ENCODE measurements at regions of chr2 and their contacts with region 1.

Region 1: DNA sequence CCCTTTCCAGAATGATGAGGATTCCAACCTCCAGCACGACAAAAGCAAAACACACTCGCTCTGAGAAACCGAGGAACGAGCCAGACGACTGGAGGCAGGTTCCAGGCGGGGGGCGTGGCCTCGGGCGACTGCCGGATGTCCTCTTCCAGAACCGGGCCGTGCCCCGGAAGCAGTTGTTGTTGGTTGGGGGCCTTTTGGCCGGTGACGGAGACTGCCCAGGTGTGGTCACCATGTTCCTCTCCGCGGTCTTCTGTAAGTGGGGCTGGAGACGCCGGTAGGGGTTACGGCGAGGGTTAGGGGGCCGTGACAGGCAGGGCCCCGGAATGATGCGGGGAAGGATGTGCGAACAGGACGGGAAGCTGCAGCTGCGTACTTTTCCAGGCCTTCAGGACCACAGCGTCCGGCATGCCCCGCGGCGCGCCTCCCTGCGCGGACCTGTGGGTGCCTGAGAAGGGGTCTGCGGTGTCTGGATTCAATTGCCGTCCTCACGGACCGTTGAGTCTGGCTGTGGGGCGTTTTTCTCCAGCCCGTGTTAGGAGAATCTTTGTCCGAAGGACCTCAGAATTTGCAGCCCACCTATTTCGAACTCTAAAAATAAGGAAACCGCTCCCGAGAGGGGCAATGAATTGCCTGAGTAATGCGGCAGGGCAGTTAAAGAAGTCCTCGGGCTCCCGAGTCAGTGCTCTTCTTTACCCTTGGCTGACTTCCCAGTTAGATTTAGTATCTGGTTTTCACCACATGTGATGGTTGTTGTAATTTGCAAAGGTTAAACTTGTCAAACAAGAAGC is at the start of gene MRPL33:
- DNase-seq: peak; percentile 96
- H3K4me3 ChIP-seq: peak within 1 kb of the TSS; percentile 80 to 94 (median 86)
- H3K27ac ChIP-seq: peak within 1 kb of the TSS; percentile 91 to 95 (median 93)
- H3K4me1 ChIP-seq: peaks cover 11 to 33% (median 15%) of the 10 kb centered on the region in 4 donors
- H3K27me3 ChIP-seq: no peaks in the 10 kb centered on the region
- CTCF ChIP-seq: no peak
- EP300 ChIP-seq: no peak
- POLR2A ChIP-seq: peak; percentile 79
- total RNA-seq, gene MRPL33: 7.2 to 89.4 (median 45.7) TPM

Region 2: GRCh38 chr2:27655155-27655951 is 116.4 kb before region 1 on chr2:
- in situ Hi-C with region 1: no loop called
- intact Hi-C with region 1: no loop called
- DNase-seq: no peak
- H3K4me3 ChIP-seq: no peak overlapping the region
- H3K27ac ChIP-seq: no peak overlapping the region
- H3K4me1 ChIP-seq: no peaks in the 10 kb centered on the region
- H3K27me3 ChIP-seq: no peaks in the 10 kb centered on the region
- CTCF ChIP-seq: no peak
- EP300 ChIP-seq: no peak
- POLR2A ChIP-seq: no peak

Region 3: GRCh38 chr2:28406276-28407096 is 634.7 kb after region 1 on chr2:
- in situ Hi-C with region 1: loop called in 2 of 4 experiments (anchors 25 kb)
- intact Hi-C with region 1: no loop called
- DNase-seq: peak; percentile 62
- H3K4me3 ChIP-seq: no peak overlapping the region
- H3K27ac ChIP-seq: peak overlapping the region; percentile 26 to 66 (median 36)
- H3K4me1 ChIP-seq: peaks cover 29 to 89% (median 42%) of the 10 kb centered on the region in 4 donors
- H3K27me3 ChIP-seq: no peaks in the 10 kb centered on the region
- CTCF ChIP-seq: no peak
- EP300 ChIP-seq: no peak
- POLR2A ChIP-seq: peak; percentile 9